Caco-2 (cell line): ENCODE measurements at regions of chr1 and their contacts with region 1.

Region 1: DNA sequence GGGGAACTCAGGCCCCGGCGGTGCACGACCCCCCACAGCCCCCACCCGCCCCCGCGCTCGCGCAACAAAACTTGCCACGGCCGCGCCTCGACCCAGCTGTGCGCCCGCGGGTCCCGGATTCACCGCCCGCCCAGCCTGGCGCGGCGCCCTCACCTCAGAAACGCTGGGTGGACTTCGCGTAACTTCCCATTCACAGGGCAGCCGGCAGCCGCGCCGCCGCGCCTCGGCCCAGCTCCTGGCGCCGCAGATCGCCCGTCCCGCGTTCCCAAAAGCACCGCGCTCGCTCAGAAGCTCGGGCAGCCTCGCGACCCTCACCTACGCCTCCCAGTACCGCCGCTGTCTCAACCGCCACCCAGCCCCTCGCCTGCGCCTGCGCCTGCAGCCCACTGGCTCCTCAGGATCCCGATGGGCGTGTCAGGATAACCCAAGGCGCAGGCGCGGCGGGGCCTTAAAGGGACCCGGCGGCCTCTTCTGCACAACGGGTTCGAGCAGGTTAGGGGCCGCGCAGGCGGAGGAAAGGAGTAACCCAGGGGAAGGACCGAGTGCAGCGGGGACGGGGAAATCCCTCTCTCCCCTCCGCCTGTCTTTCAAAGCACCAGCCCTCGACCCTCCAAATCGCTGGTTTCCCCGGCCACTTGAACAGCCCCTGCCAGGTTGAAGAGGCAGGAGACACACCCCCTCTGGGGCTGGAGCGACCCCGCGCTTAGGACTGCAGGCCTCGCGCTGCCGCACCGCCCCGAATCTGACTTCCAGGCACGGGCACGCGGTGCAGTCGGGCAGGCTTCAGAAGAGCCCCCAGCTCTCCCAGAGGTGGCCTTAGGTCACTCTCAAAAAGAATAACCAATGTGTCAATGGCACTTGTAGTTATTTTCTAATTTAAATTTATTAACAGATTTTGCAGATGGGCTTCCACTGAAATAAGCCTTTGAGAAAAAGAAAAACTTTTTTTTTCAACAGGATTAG is at the start of gene NBPF1:
- DNase-seq: peak; percentile 98 to 99
- H3K4me3 ChIP-seq: peak within 1 kb of the TSS; percentile 63
- H3K4me3 Mint-ChIP-seq: no peak within 1 kb of the TSS
- H3K27ac Mint-ChIP-seq: no peak within 1 kb of the TSS
- H3K4me1 ChIP-seq: 0 out of 2 replicates have a peak, but pooled peaks cover 4% of the 10 kb centered on the region
- H3K4me1 Mint-ChIP-seq: no peaks in the 10 kb centered on the region
- H3K27me3 ChIP-seq: no peaks in the 10 kb centered on the region
- H3K27me3 Mint-ChIP-seq: no peaks in the 10 kb centered on the region
- CTCF ChIP-seq: peak in 1 of 2 experiments; percentile 4
- total RNA-seq, gene NBPF1: 51.1 and 59.3 TPM in 2 replicates

Region 2: DNA sequence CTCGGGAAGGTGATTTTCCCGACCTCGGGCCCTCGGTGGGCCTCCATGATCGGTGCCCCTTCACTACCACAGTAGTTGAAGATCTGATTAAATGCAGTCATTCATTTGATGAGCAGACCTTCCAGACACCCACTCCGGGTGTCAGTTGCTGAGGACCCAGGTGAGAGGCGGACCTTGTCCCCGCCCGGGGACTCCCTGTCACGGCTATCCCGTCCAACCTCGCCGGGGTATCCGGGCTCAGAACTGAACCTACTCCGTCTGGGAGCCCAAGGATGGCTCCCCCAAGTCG is 30.7 kb after region 1 on chr1:
- CTCF ChIA-PET with region 1: no interaction called
- POLR2A ChIA-PET with region 1: no interaction called
- intact Hi-C with region 1: loop called (anchors 1 kb)
- DNase-seq: no peak
- H3K4me3 ChIP-seq: peak overlapping the region; percentile 64
- H3K4me3 Mint-ChIP-seq: no peak overlapping the region
- H3K27ac Mint-ChIP-seq: no peak overlapping the region
- H3K4me1 ChIP-seq: peaks cover 11% of the 10 kb centered on the region
- H3K4me1 Mint-ChIP-seq: no peaks in the 10 kb centered on the region
- H3K27me3 ChIP-seq: no peaks in the 10 kb centered on the region
- H3K27me3 Mint-ChIP-seq: no peaks in the 10 kb centered on the region
- CTCF ChIP-seq: no peak

Region 3: GRCh38 chr1:17032741-17033140 is 419.3 kb after region 1 on chr1:
- CTCF ChIA-PET with region 1: no interaction called
- POLR2A ChIA-PET with region 1: no interaction called
- intact Hi-C with region 1: no loop called
- DNase-seq: no peak
- H3K4me3 ChIP-seq: no peak overlapping the region
- H3K4me3 Mint-ChIP-seq: no peak overlapping the region
- H3K27ac Mint-ChIP-seq: no peak overlapping the region
- H3K4me1 ChIP-seq: no peaks in the 10 kb centered on the region
- H3K4me1 Mint-ChIP-seq: no peaks in the 10 kb centered on the region
- H3K27me3 ChIP-seq: no peaks in the 10 kb centered on the region
- H3K27me3 Mint-ChIP-seq: no peaks in the 10 kb centered on the region
- CTCF ChIP-seq: no peak